ENCODE measurements at regions of chr10 and their contacts with region 1.

Region 1: GRCh38 chr10:109883859-109884771 is 39.2 kb downstream of the XPNPEP1 start:
- DNase-seq: peak; percentile 87
- H3K4me3 Mint-ChIP-seq: no peak overlapping the region
- H3K27ac Mint-ChIP-seq: no peak overlapping the region
- H3K4me1 Mint-ChIP-seq: peaks cover 13% of the 10 kb centered on the region
- H3K27me3 Mint-ChIP-seq: no peaks in the 10 kb centered on the region

Region 2: GRCh38 chr10:109784236-109784635 is 99.9 kb before region 1 on chr10:
- intact Hi-C with region 1: no loop called
- DNase-seq: no peak
- H3K4me3 Mint-ChIP-seq: no peak overlapping the region
- H3K27ac Mint-ChIP-seq: no peak overlapping the region
- H3K4me1 Mint-ChIP-seq: no peaks in the 10 kb centered on the region
- H3K27me3 Mint-ChIP-seq: peaks cover 4% of the 10 kb centered on the region

Region 3: GRCh38 chr10:109956454-109957091 is 72.5 kb after region 1 on chr10:
- intact Hi-C with region 1: loop called (anchors 5 kb)
- DNase-seq: peak; percentile 69
- H3K4me3 Mint-ChIP-seq: no peak overlapping the region
- H3K27ac Mint-ChIP-seq: no peak overlapping the region
- H3K4me1 Mint-ChIP-seq: peaks cover 2% of the 10 kb centered on the region
- H3K27me3 Mint-ChIP-seq: peaks cover 19% of the 10 kb centered on the region

Region 4: GRCh38 chr10:109978481-109978880 is 94.4 kb after region 1 on chr10:
- intact Hi-C with region 1: loop called (anchors 5 kb)
- DNase-seq: peak; percentile 89
- H3K4me3 Mint-ChIP-seq: no peak overlapping the region
- H3K27ac Mint-ChIP-seq: no peak overlapping the region
- H3K4me1 Mint-ChIP-seq: peaks cover 2% of the 10 kb centered on the region
- H3K27me3 Mint-ChIP-seq: peaks cover 10% of the 10 kb centered on the region

Region 5: DNA sequence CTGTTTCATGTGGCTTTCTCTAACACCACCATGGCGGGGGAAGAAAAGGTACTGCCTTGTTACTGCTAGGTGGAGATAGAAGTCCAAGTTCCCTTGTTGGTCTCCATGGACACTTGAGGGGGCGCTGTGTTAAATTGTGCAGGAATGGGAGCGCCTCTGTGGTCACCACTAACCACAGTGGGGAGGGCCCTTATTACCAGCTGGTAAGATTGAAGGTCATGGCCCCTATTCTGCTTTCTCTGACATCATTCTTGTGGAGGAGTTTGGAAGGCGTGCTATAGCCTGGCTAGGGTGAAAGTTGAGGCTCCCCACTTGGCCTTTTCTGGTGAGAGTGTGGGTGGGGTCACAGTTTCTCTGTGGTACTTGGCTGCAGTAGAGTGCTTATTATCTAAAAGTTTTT is 308.4 kb after region 1 on chr10:
- intact Hi-C with region 1: no loop called
- DNase-seq: no peak
- H3K4me3 Mint-ChIP-seq: no peak overlapping the region
- H3K27ac Mint-ChIP-seq: no peak overlapping the region
- H3K4me1 Mint-ChIP-seq: peaks cover 3% of the 10 kb centered on the region
- H3K27me3 Mint-ChIP-seq: peaks cover 52% of the 10 kb centered on the region